ENCODE measurements at regions of chr11 and their contacts with region 1.

Region 1: DNA sequence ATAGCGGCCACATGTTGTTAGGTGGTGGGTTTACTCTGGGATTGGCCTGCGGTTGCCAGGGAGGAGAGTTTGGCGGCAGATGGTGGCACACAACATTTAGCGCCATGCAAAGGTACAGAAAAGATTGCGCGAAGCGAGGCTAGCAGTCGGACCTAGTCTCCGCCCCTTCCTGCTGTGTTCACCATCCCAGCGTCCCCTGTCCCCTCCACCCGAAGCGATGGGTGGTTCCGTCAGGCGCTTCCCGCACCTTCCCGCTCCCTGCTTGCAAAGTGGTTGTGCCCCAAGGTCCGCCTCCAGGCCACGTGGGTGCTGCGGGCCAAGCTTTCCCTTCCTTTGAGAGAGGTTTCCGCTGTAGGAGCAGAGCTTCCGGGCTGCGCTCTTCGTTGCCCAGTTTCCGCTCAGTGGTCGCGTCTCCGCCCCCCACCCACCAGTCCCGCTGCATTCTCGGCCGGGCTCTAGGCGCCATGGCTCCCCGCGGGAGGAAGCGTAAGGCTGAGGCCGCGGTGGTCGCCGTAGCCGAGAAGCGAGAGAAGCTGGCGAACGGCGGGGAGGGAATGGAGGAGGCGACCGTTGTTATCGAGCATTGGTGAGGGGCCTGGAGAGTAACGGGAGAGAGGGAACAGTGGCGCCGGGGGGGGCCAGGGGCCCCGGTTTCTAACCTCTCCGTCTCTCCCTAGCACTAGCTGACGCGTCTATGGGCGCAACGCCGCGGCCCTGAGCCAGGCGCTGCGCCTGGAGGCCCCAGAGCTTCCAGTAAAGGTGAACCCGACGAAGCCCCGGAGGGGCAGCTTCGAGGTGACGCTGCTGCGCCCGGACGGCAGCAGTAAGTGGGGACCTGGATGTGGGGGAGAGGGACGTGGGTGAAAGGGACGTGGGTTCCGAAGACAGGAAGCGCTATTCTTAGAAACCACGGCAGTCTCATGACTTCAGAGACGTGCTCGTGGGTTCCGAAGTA is at the start of gene SELENOH:
- DNase-seq: peak; percentile 93
- ATAC-seq: peak; percentile 83
- H3K4me3 ChIP-seq: peak within 1 kb of the TSS; percentile 83 to 97 (median 94)
- H3K4me3 Mint-ChIP-seq: peak within 1 kb of the TSS; percentile 99
- H3K27ac ChIP-seq: peak within 1 kb of the TSS; percentile 90 to 97
- H3K27ac Mint-ChIP-seq: peak within 1 kb of the TSS; percentile 99
- H3K4me1 ChIP-seq: peaks cover 11 to 32% of the 10 kb centered on the region in 2 donors
- H3K4me1 Mint-ChIP-seq: peaks cover 38% of the 10 kb centered on the region
- H3K27me3 ChIP-seq: no peaks in the 10 kb centered on the region
- H3K27me3 Mint-ChIP-seq: no peaks in the 10 kb centered on the region
- CTCF ChIP-seq: no peak
- total RNA-seq, gene SELENOH: 147 and 153 TPM in 2 replicates

Region 2: GRCh38 chr11:57124917-57125316 is 616.5 kb before region 1 on chr11:
- CTCF ChIA-PET with region 1: no interaction called
- POLR2A ChIA-PET with region 1: no interaction called
- intact Hi-C with region 1: no loop called
- DNase-seq: no peak
- ATAC-seq: no peak
- H3K4me3 ChIP-seq: no peak overlapping the region
- H3K4me3 Mint-ChIP-seq: no peak overlapping the region
- H3K27ac ChIP-seq: no peak overlapping the region
- H3K27ac Mint-ChIP-seq: no peak overlapping the region
- H3K4me1 ChIP-seq: no peaks in the 10 kb centered on the region
- H3K4me1 Mint-ChIP-seq: no peaks in the 10 kb centered on the region
- H3K27me3 ChIP-seq: peaks cover 0 to 7% (median 1%) of the 10 kb centered on the region in 4 experiments
- H3K27me3 Mint-ChIP-seq: peaks cover 37% of the 10 kb centered on the region
- CTCF ChIP-seq: no peak

Region 3: GRCh38 chr11:57474017-57474802 is 267.2 kb before region 1 on chr11:
- CTCF ChIA-PET with region 1: no interaction called
- POLR2A ChIA-PET with region 1: no interaction called
- intact Hi-C with region 1: no loop called
- DNase-seq: no peak
- ATAC-seq: no peak
- H3K4me3 ChIP-seq: no peak overlapping the region
- H3K4me3 Mint-ChIP-seq: peak overlapping the region; percentile 4
- H3K27ac ChIP-seq: no peak overlapping the region
- H3K27ac Mint-ChIP-seq: no peak overlapping the region
- H3K4me1 ChIP-seq: peaks cover 30 to 31% of the 10 kb centered on the region in 2 donors
- H3K4me1 Mint-ChIP-seq: peaks cover 25% of the 10 kb centered on the region
- H3K27me3 ChIP-seq: peaks cover 0 to 31% (median 3%) of the 10 kb centered on the region in 4 experiments
- H3K27me3 Mint-ChIP-seq: peaks cover 5% of the 10 kb centered on the region
- CTCF ChIP-seq: no peak

Region 4: GRCh38 chr11:57657194-57658022 is 84.0 kb before region 1 on chr11 and contains the start of gene CLP1:
- CTCF ChIA-PET with region 1: no interaction called
- POLR2A ChIA-PET with region 1: interaction called, 5 read pairs
- intact Hi-C with region 1: loop called (anchors 1 kb)
- DNase-seq: peak; percentile 98
- ATAC-seq: peak; percentile 97
- H3K4me3 ChIP-seq: peak within 1 kb of the TSS; percentile 68 to 95 (median 92)
- H3K4me3 Mint-ChIP-seq: peak within 1 kb of the TSS; percentile 94
- H3K27ac ChIP-seq: peak within 1 kb of the TSS; percentile 77 to 92
- H3K27ac Mint-ChIP-seq: peak within 1 kb of the TSS; percentile 94
- H3K4me1 ChIP-seq: peaks cover 8 to 14% of the 10 kb centered on the region in 2 donors
- H3K4me1 Mint-ChIP-seq: peaks cover 28% of the 10 kb centered on the region
- H3K27me3 ChIP-seq: no peaks in the 10 kb centered on the region
- H3K27me3 Mint-ChIP-seq: no peaks in the 10 kb centered on the region
- CTCF ChIP-seq: no peak
- total RNA-seq, gene CLP1: 15.5 and 15.8 TPM in 2 replicates

Region 5: DNA sequence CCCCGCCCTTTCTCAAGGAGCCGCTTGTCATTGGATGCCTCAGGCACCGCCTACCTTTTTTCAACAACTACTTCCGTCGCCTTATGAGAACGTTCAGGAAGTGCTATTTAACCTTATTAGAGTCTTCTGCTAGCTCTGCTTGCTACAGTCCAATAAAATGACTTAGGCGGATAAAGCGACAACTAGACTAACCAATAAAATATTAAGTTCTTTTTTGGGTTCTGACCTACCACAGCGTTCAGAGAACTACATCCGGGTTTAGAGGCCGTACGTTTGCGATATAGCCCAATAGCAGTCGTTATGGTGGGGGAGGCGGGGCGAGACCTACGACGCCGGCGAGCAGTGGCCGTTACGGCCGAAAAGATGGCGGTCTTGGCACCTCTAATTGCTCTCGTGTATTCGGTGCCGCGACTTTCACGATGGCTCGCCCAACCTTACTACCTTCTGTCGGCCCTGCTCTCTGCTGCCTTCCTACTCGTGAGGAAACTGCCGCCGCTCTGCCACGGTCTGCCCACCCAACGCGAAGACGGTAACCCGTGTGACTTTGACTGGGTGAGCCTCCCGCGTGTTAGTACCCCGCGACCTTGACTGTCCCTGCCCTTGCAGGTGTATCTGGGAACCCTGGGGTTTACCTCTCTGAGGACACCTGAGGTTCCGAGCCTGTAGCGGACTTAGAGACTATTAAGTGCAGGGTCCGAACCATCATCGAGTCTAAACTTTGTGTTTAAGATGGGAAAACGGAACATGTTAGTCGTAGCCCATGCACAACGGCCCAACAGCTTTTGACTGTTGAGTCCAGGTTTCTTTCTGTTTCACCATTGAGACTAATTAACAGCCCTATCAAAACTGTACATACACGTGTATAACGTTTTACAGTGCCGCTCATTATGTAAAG is 28.9 kb before region 1 on chr11 and contains the start of gene TMX2:
- CTCF ChIA-PET with region 1: interaction called, 4 read pairs
- POLR2A ChIA-PET with region 1: interaction called, 12 read pairs
- intact Hi-C with region 1: loop called (anchors 1 kb)
- DNase-seq: peak; percentile 96
- ATAC-seq: peak; percentile 86
- H3K4me3 ChIP-seq: peak within 1 kb of the TSS; percentile 78 to 100 (median 93)
- H3K4me3 Mint-ChIP-seq: peak within 1 kb of the TSS; percentile 99
- H3K27ac ChIP-seq: peak within 1 kb of the TSS; percentile 70 to 96
- H3K27ac Mint-ChIP-seq: peak within 1 kb of the TSS; percentile 94
- H3K4me1 ChIP-seq: peaks cover 21 to 28% of the 10 kb centered on the region in 2 donors
- H3K4me1 Mint-ChIP-seq: peaks cover 42% of the 10 kb centered on the region
- H3K27me3 ChIP-seq: no peaks in the 10 kb centered on the region
- H3K27me3 Mint-ChIP-seq: no peaks in the 10 kb centered on the region
- CTCF ChIP-seq: no peak
- total RNA-seq, gene TMX2: 58.8 and 60.2 TPM in 2 replicates

Region 6: DNA sequence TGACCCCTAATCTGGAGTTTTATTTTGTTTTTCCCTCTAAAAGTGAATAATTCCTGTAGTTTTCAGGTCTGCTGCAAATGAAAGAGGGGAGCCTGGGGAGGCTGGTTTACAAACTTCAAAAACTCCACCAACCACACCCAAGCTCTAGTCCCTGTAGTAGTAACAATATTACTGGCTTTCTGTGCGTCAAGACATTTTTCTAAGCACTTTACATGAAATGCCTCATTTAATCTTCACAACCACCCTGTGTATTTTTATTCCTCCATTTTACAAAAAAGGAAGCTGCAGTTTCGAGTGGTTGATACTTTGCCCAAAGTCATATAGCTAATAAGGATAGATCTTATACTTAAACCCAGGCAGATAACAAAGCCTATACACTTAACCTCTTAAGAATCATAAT is 43.7 kb after region 1 on chr11:
- CTCF ChIA-PET with region 1: interaction called, 3 read pairs
- POLR2A ChIA-PET with region 1: interaction called, 10 read pairs
- intact Hi-C with region 1: no loop called
- DNase-seq: peak; percentile 74
- ATAC-seq: peak; percentile 84
- H3K4me3 ChIP-seq: peak overlapping the region in 3 of 5 experiments; percentile 13 to 33 (median 27)
- H3K4me3 Mint-ChIP-seq: peak overlapping the region; percentile 89
- H3K27ac ChIP-seq: peak overlapping the region; percentile 82 to 89
- H3K27ac Mint-ChIP-seq: peak overlapping the region; percentile 93
- H3K4me1 ChIP-seq: peaks cover 58 to 60% of the 10 kb centered on the region in 2 donors
- H3K4me1 Mint-ChIP-seq: peaks cover 52% of the 10 kb centered on the region
- H3K27me3 ChIP-seq: no peaks in the 10 kb centered on the region
- H3K27me3 Mint-ChIP-seq: no peaks in the 10 kb centered on the region
- CTCF ChIP-seq: no peak

Region 7: GRCh38 chr11:57792060-57792541 is 50.7 kb after region 1 on chr11:
- CTCF ChIA-PET with region 1: interaction called, 3 read pairs
- POLR2A ChIA-PET with region 1: interaction called, 8 read pairs
- intact Hi-C with region 1: loop called (anchors 1 kb)
- DNase-seq: peak; percentile 94
- ATAC-seq: peak; percentile 89
- H3K4me3 ChIP-seq: peak overlapping the region; percentile 15 to 62 (median 36)
- H3K4me3 Mint-ChIP-seq: peak overlapping the region; percentile 80
- H3K27ac ChIP-seq: peak overlapping the region; percentile 87 to 97
- H3K27ac Mint-ChIP-seq: peak overlapping the region; percentile 93
- H3K4me1 ChIP-seq: peaks cover 53 to 57% of the 10 kb centered on the region in 2 donors
- H3K4me1 Mint-ChIP-seq: peaks cover 56% of the 10 kb centered on the region
- H3K27me3 ChIP-seq: no peaks in the 10 kb centered on the region
- H3K27me3 Mint-ChIP-seq: no peaks in the 10 kb centered on the region
- CTCF ChIP-seq: no peak

Measured in B cell (primary cell).